Mammary epithelial cell (primary cell): ENCODE measurements at regions of chr1 and their contacts with region 1.

Region 1: DNA sequence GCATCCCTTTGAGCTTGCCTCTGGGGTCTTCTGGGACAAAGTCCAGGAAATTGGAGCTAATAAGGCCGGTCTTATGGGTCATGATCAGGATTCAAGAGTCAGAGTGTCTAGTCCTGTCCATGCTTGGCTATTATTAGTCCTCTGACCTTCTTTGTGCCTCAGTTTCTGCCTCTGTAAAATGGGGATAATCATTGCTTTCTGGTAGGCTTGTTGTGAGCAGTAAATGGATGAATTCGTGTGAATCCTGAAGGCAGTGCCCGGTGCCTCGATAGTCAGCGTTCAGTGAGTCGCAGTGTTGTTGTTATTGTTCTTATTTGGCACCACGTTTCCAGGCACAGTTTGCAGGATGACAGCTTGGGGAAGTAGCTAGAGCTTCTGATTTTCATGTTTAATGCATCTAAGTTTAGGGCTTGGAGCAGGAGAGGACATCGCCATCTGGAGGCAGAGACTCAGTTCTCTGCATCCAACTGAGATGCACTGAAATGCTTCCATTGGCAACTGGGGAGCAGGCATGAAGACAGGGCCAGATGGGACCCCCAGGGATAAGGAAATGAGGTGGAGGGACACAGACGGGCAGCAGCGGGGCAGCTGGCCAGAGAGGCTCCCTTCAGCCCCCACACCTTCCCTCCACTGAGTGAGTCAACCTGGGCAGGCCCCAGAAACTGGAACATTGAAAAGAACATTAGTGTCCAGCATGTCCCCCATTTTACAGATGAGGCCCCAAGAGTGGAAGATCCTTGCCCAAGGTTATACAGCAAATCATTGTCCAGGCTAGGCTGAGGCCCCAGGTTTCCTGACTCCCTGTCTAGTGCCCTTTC is 160.3 kb downstream of the PTPRU start:
- DNase-seq: no peak
- H3K4me3 ChIP-seq: no peak overlapping the region
- H3K27ac ChIP-seq: no peak overlapping the region
- H3K4me1 ChIP-seq: peaks cover 10% of the 10 kb centered on the region
- H3K27me3 ChIP-seq: no peaks in the 10 kb centered on the region
- CTCF ChIP-seq: peak in 1 of 2 donors; percentile 55

Region 2: DNA sequence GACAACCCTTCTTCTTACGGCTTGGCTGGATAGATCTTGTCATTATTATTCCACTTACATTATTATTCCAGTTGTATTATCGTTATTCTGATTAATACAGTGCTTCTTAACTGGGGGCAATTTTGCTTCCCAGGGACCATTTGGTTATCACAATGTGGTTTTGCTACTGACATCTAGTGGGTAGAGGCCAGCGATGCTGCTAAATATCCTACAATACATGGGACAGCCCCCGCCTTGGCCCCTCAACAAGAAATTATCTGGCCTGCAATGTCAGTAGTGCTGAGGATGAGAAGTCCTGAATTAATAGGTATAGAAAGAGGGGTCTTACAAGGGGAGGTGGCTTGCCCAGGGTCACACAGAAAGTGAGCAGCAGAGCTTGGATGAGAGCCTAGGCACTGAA is 54.7 kb before region 1 on chr1:
- CTCF ChIA-PET with region 1: interaction called, 4 read pairs
- dilution Hi-C with region 1: no loop called
- in situ Hi-C with region 1: no loop called
- intact Hi-C with region 1: loop called (anchors 1 kb)
- DNase-seq: no peak
- H3K4me3 ChIP-seq: no peak overlapping the region
- H3K27ac ChIP-seq: no peak overlapping the region
- H3K4me1 ChIP-seq: no peaks in the 10 kb centered on the region
- H3K27me3 ChIP-seq: no peaks in the 10 kb centered on the region
- CTCF ChIP-seq: peak in 1 of 2 donors; percentile 33

Region 3: DNA sequence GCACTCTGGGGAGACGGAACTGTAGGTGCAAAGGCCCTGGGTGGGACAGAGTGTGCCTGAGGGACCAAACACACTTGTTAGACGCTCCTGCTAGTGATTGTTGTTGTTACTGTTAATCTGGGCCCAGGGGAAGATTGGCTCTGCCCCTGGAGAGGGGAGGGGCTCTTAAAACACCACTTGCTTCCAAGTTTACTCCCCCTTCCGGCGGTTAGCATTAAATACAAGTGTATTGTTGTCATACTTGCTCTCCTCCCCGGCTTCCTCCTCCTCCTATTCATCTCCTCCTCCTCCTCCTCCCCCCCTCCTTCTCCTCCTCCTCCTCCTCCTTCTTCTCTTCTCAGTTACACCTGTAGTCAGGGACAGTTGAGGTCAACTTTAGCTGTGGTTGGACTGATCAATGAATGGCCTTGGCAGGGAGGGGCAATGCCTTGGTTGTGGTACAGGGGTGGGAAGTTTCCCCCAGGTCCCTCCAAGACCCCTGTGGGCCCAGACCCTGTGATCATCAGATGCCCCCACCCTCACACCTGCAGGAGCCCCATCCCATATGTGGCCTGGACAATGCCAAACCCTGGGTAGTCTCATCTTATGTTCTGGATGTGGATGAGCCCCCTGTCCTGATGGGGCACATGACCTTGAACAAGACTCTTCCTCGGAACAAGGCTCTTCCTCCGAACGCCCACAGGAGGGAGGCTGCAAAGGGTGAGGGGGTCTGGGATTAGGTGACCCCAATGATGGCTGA is 57.0 kb after region 1 on chr1:
- CTCF ChIA-PET with region 1: no interaction called
- dilution Hi-C with region 1: no loop called
- in situ Hi-C with region 1: no loop called
- intact Hi-C with region 1: no loop called
- DNase-seq: peak; percentile 15
- H3K4me3 ChIP-seq: no peak overlapping the region
- H3K27ac ChIP-seq: no peak overlapping the region
- H3K4me1 ChIP-seq: no peaks in the 10 kb centered on the region
- H3K27me3 ChIP-seq: no peaks in the 10 kb centered on the region
- CTCF ChIP-seq: peak; percentile 28 to 43

Region 4: DNA sequence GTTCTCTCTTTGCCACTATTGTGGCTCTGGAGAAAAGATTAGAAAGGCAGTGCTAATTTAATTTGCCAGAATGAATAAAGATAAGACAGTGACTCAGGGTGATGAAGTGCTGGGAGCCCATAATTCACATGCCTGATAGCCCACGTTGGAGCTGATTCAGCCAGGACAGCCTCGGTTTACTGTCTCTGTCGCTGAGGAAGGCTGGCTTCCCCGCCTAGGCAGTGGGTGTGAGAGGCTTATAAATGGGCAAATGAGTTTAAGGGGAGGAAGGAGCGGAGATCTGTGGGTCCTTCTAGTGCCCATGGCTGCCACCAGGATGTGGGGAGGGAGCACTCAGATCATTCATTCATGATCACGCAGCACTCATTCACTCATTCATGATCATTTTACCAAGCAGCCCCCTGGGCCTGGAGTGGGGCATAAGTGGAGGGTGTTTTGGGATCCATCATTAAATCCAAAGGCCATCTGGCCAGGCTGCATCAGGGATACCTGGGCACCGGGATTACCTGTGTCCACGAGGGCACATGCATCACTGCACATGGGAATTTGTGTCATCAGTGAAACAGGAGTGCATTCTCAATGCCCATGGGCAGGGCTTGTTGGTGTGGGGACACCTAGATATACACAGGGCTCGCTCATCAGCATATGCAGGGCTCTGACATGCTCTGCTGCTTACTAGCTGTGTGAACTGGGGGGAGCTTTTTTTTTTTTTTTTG is 1011.4 kb after region 1 on chr1:
- CTCF ChIA-PET with region 1: no interaction called
- dilution Hi-C with region 1: no loop called
- in situ Hi-C with region 1: loop called (anchors 5 kb)
- intact Hi-C with region 1: no loop called
- DNase-seq: no peak
- H3K4me3 ChIP-seq: no peak overlapping the region
- H3K27ac ChIP-seq: no peak overlapping the region
- H3K4me1 ChIP-seq: peaks cover 6% of the 10 kb centered on the region
- H3K27me3 ChIP-seq: no peaks in the 10 kb centered on the region
- CTCF ChIP-seq: no peak